ENCODE measurements at regions of chrX and their contacts with region 1.

Region 1: GRCh38 chrX:101799387-101799786 is 132.4 kb downstream of the ZMAT1 start:
- DNase-seq: peak; percentile 94
- H3K4me3 Mint-ChIP-seq: peak overlapping the region; percentile 73
- H3K27ac Mint-ChIP-seq: no peak overlapping the region
- H3K4me1 Mint-ChIP-seq: peaks cover 4% of the 10 kb centered on the region
- H3K27me3 Mint-ChIP-seq: no peaks in the 10 kb centered on the region

Region 2: DNA sequence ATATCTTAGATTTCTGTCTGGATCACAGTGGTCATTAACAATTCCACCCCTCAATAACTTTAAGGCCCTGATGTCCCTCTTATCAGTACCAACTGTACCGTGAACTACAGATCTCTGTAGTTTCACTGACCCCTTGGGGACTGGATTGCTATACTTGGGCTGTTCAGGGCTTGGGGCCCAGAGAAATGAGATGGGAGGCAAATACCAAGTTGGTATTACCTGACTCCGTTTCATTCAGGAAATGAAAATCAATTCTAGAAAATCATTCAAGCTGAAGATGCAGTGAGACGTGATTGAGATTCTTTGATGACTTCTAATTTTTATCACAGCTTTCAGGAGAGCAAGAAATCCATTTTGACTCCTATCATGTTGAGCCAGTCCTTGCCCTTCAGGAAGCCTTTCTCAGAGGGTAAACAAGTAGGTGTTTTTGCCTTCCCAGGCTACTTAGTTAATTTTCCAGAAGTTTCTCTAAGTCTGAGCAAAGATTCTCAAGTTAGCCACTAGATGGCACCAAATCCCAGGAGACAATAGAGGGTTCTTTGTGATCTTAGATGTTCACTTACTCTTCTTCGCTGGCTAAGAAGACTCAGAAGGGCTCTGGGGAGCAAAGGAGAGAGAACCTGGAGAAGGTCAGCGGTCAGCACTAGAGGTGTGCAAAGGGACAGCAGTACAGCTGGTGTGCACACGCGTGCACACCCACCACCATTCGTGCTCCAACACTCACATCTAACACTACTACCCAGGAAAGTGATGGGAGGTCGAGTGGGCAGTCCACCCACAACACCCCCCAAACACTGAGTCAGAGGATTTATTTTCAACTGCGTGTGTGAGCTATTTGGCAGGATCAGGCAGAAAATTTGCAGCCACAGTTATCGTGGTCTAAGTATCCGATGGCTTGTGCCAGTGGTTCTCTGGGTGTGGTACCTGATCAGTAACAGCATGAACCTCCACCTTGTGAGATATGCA is 383.9 kb before region 1 on chrX:
- intact Hi-C with region 1: loop called (anchors 1 kb)
- DNase-seq: peak; percentile 83
- H3K4me3 Mint-ChIP-seq: peak overlapping the region; percentile 56
- H3K27ac Mint-ChIP-seq: peak overlapping the region; percentile 86
- H3K4me1 Mint-ChIP-seq: peaks cover 38% of the 10 kb centered on the region
- H3K27me3 Mint-ChIP-seq: no peaks in the 10 kb centered on the region

Region 3: GRCh38 chrX:101595739-101596419 is 203.5 kb before region 1 on chrX:
- intact Hi-C with region 1: loop called (anchors 5 kb)
- DNase-seq: peak; percentile 82
- H3K4me3 Mint-ChIP-seq: no peak overlapping the region
- H3K27ac Mint-ChIP-seq: no peak overlapping the region
- H3K4me1 Mint-ChIP-seq: peaks cover 2% of the 10 kb centered on the region
- H3K27me3 Mint-ChIP-seq: peaks cover 5% of the 10 kb centered on the region

Region 4: GRCh38 chrX:101617211-101618191 is 181.9 kb before region 1 on chrX and contains the start of gene ARMCX6:
- intact Hi-C with region 1: loop called (anchors 5 kb)
- DNase-seq: peak; percentile 90
- H3K4me3 Mint-ChIP-seq: peak within 1 kb of the TSS; percentile 92
- H3K27ac Mint-ChIP-seq: peak within 1 kb of the TSS; percentile 91
- H3K4me1 Mint-ChIP-seq: peaks cover 29% of the 10 kb centered on the region
- H3K27me3 Mint-ChIP-seq: no peaks in the 10 kb centered on the region
- total RNA-seq, gene ARMCX6: 75.5 and 77.1 TPM in 2 replicates

Region 5: GRCh38 chrX:101682723-101683122 is 116.7 kb before region 1 on chrX:
- intact Hi-C with region 1: no loop called
- DNase-seq: no peak
- H3K4me3 Mint-ChIP-seq: no peak overlapping the region
- H3K27ac Mint-ChIP-seq: no peak overlapping the region
- H3K4me1 Mint-ChIP-seq: no peaks in the 10 kb centered on the region
- H3K27me3 Mint-ChIP-seq: peaks cover 3% of the 10 kb centered on the region

Region 6: GRCh38 chrX:101759000-101759399 is 40.4 kb before region 1 on chrX:
- intact Hi-C with region 1: loop called (anchors 2 kb)
- DNase-seq: peak; percentile 75
- H3K4me3 Mint-ChIP-seq: no peak overlapping the region
- H3K27ac Mint-ChIP-seq: no peak overlapping the region
- H3K4me1 Mint-ChIP-seq: peaks cover 3% of the 10 kb centered on the region
- H3K27me3 Mint-ChIP-seq: peaks cover 6% of the 10 kb centered on the region

Region 7: GRCh38 chrX:101931488-101932248 is 132.3 kb after region 1 on chrX and contains the start of gene ZMAT1:
- intact Hi-C with region 1: loop called (anchors 2 kb)
- DNase-seq: peak; percentile 94
- H3K4me3 Mint-ChIP-seq: peak within 1 kb of the TSS; percentile 87
- H3K27ac Mint-ChIP-seq: peak within 1 kb of the TSS; percentile 95
- H3K4me1 Mint-ChIP-seq: peaks cover 9% of the 10 kb centered on the region
- H3K27me3 Mint-ChIP-seq: no peaks in the 10 kb centered on the region
- total RNA-seq, gene ZMAT1: 0.57 and 0.75 TPM in 2 replicates